ENCODE measurements at regions of chr17 and their contacts with region 1.

Region 1: DNA sequence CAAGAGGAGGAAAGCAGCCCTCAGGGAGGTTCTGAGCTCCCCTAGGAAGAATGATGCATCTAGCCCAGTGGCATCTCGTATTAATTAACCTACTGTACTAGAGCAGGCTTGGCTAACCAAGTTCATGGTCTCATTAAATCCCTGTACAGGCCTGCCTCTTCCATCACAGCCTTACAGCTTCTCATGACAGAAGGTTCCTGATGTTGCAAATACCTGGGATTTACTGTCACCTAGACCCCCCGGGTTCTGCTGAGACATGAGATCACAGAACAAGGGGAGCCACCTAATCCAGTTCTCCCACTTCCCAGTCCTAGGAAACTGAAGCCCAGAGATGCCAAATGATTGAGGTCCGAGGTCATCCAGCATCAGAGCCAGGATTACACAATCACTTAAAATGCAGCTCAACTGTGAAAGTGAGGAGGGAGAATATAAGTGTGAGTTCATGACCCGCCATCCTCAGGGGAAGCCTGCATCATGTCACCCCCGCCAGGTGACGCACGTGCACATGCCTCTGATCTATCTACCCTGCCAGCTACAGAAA is 23.9 kb downstream of the ACLY start:
- DNase-seq: peak in 1 of 5 donors; percentile 44
- ATAC-seq: peak; percentile 27 to 71 (median 52)
- H3K4me3 ChIP-seq: no peak overlapping the region
- H3K27ac ChIP-seq: peak overlapping the region in 10 of 12 donors; percentile 17 to 75 (median 47)
- H3K4me1 ChIP-seq: peaks cover 0 to 13% (median 6%) of the 10 kb centered on the region in 12 donors
- H3K27me3 ChIP-seq: no peaks in the 10 kb centered on the region
- CTCF ChIP-seq: no peak
- POLR2A ChIP-seq: no peak

Region 2: DNA sequence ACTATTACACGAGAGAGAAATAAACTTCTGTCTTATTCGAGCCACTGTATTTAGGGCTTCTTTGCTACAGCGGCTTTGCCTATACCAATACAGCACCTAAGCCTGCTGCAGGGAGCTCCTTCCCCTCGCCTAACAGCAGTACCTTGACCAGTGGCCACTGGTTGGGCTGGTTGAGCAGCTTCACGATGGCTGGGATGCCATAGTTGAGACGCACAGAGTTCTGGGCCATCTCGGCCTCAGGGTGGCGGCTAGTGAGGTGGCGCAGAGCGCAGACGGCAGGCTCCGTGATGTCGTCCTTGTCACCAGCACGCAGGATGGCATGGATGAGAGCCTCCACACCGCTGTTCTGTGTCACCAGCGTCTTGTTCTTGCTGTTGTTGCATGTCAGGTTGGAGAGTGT is 132.0 kb before region 1 on chr17:
- intact Hi-C with region 1: loop called in 1 of 10 experiments (anchors 5 kb)
- DNase-seq: no peak
- ATAC-seq: peak in 1 of 4 donors; percentile 33
- H3K4me3 ChIP-seq: no peak overlapping the region
- H3K27ac ChIP-seq: no peak overlapping the region
- H3K4me1 ChIP-seq: no peaks in the 10 kb centered on the region
- H3K27me3 ChIP-seq: no peaks in the 10 kb centered on the region
- CTCF ChIP-seq: no peak
- POLR2A ChIP-seq: no peak

Measured in heart left ventricle (tissue), 16 donors.